Esophagus squamous epithelium (tissue), 5 donors: ENCODE measurements at regions of chr9 and their contacts with region 1.

Region 1: DNA sequence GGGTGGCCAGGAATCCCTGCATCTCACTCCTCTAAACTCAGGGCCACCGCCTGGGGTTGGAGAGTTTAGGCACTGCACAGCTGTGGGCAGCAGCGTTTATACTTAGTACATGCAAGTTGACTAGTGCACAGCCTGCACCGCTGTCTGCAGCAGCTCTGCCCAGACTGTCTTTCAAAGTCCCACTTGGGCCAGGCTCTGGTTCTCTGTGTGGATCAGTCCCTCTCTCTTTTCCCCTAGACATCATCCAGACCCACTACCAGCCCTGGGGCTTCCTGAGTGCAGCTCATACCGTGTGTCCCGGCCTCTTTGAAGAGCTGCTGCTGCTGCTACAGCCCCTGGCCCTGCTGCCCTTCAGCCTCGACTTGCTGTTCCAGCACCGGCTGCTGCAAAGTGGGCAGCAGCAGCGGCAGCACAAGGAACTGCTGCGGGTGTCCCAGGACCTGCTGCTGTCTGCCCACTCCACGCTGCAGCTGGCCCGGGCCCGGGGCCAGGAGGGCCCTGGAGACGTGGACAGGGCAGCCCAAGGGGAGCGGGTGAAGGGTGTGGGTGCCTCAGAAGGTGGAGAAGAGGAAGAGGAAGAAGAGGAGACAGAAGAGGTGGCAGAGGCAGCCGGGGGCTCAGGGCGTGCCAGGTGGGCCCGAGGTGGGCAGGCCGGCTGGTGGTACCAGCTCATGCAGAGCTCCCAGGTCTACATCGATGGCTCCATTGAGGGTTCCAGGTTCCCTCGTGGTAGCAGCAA is 45.1 kb upstream of the TESK1 start:
- DNase-seq: no peak
- H3K4me3 ChIP-seq: no peak overlapping the region
- H3K27ac ChIP-seq: no peak overlapping the region
- H3K4me1 ChIP-seq: peaks cover 8 to 46% (median 24%) of the 10 kb centered on the region in 3 donors
- H3K27me3 ChIP-seq: no peaks in the 10 kb centered on the region
- CTCF ChIP-seq: no peak
- POLR2A ChIP-seq: no peak

Region 2: DNA sequence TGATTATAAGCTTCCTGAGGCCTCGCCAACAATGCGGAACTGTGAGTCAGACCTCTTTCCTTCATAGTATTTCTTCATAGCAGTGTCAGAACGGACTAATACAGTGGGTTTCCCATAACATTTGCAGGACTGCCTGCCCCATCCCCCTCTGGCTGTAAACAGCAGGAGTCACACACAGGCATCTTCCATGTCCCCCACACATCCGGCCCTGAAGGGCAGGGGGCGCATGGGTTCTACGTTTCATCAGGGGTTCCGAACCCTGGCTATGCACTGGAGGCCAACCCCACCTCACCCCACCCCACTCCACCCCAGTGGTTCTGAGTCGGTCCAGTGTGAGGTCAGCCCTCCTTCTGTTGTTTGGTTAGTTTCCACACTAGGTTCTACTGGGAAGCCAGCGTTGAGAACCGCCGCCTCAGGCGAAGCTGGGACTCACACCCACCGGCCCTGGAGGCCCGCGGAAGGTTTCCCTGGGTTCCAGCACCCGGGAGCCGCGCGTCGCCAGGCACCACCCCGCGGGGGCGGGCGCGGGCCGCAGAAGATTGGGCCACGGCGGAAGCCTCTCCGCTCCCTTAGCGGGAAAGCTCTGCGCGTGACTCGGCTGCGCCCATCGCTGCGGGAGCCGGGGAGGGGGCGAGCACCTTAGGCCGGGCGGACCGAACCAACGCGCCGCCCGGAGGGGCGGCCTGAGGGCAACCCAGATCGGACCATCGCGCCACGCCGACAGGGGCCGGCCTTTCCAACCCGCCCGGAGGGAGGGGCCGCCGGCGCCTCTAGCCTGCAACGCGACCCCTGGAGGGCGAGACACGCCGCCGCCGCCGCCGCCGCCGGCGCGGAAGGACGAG is 70.4 kb before region 1 on chr9 and contains the start of gene RUSC2:
- intact Hi-C with region 1: loop called (anchors 5 kb)
- DNase-seq: no peak
- H3K4me3 ChIP-seq: peak within 1 kb of the TSS; percentile 62 to 91 (median 84)
- H3K27ac ChIP-seq: peak within 1 kb of the TSS; percentile 86 to 98 (median 96)
- H3K4me1 ChIP-seq: peaks cover 0 to 50% (median 18%) of the 10 kb centered on the region in 3 donors
- H3K27me3 ChIP-seq: no peaks in the 10 kb centered on the region
- CTCF ChIP-seq: peak in 5 of 6 experiments; percentile 21 to 53 (median 36)
- POLR2A ChIP-seq: peak in 2 of 4 donors; percentile 61 to 64
- total RNA-seq, gene RUSC2: 5.1 to 16.0 (median 8.6) TPM